Aorta (tissue), 5 donors: ENCODE measurements at regions of chr1 and their contacts with region 1.

Region 1: DNA sequence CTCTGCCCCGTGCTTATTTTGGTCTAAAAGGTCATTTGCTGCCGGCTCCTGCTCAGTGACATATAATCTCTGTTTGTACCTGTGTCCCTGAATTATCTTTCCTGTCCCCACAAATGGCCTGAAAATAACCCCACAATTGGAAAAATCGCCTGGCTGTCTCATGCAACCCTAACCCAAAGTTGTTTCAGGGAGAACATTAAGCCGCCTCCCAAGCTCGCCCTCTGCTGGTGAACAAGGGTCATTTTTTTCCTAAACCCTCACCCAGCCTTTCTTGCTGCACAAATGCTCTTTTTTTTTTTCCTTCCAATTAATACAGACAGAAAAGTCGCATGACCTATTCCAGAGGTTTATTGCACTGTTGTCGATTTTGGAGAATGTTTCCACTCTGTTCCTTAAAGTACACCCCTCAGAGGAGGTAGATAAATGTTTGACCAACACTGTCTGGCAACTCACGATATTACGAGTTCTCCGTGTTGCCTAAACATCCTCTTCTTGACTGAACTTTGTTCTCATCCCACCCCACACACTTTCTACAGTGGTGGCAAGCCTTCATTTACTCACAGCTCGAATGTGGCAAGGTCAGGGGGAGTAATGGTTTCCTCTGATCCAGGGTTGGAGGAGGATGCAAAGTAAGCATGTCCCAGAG is 148.7 kb downstream of the ZZZ3 start:
- DNase-seq: peak in 1 of 2 donors; percentile 56
- ATAC-seq: peak; percentile 69
- H3K4me3 ChIP-seq: no peak overlapping the region
- H3K27ac ChIP-seq: no peak overlapping the region
- H3K4me1 ChIP-seq: no peaks in the 10 kb centered on the region
- H3K27me3 ChIP-seq: no peaks in the 10 kb centered on the region

Region 2: GRCh38 chr1:77143529-77144121 is 390.2 kb before region 1 on chr1:
- intact Hi-C with region 1: loop called (anchors 2 to 5 kb)
- DNase-seq: no peak
- ATAC-seq: no peak
- H3K4me3 ChIP-seq: no peak overlapping the region
- H3K27ac ChIP-seq: no peak overlapping the region
- H3K4me1 ChIP-seq: no peaks in the 10 kb centered on the region
- H3K27me3 ChIP-seq: no peaks in the 10 kb centered on the region

Region 3: GRCh38 chr1:77281491-77282186 is 252.1 kb before region 1 on chr1 and contains the start of gene AK5:
- intact Hi-C with region 1: loop called in 1 of 2 experiments (anchors 10 kb)
- DNase-seq: peak; percentile 44 to 79
- ATAC-seq: peak; percentile 74
- H3K4me3 ChIP-seq: peak within 1 kb of the TSS; percentile 45 to 61
- H3K27ac ChIP-seq: no peak within 1 kb of the TSS
- H3K4me1 ChIP-seq: no peaks in the 10 kb centered on the region
- H3K27me3 ChIP-seq: no peaks in the 10 kb centered on the region
- total RNA-seq, gene AK5: 0.71 to 2.1 TPM